Activated CD4-positive, alpha-beta memory T cell treated with anti-CD3 and anti-CD28 coated beads for 36 hours (primary cell): ENCODE measurements at regions of chr10 and their contacts with region 1.

Region 1: DNA sequence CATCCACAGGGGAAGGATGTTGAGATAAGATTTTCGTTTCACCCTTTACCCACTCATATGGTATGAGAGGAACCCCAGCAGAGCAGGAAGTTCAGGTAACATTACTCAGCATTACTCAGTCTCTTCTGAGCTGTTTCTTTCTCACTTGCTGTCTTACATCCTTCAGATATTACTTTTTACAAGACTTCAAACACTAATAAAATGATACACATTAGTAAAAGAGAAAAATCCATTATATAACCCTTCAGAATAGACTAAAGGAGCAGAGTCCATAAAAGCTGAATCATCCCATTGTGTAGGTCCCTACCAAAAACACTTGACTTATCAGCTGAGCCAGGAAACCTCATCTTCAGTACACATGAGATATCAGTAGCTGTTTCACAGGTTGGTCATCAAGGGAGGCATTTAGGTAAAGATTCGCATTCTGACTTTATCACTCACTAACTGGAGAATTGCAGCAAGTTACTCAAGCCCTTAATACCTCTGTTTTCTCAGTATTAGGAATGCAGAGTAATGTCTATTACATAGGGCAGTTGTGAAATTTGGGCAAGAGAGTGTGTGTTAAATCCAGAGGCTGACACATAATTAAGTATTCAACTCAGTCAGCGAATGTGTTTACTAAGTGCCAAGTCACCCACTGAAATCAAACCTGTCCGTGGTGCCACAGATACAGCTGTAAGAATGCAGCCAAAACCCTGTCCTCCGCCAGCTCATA is 44.7 kb downstream of the KLF6 start:
- DNase-seq: peak; percentile 57
- H3K4me3 Mint-ChIP-seq: peak overlapping the region; percentile 43
- H3K27ac Mint-ChIP-seq: peak overlapping the region; percentile 82
- H3K4me1 Mint-ChIP-seq: peaks cover 28% of the 10 kb centered on the region
- H3K27me3 Mint-ChIP-seq: no peaks in the 10 kb centered on the region

Region 2: GRCh38 chr10:3668276-3668965 is 71.9 kb before region 1 on chr10:
- CTCF ChIA-PET with region 1: no interaction called
- POLR2A ChIA-PET with region 1: no interaction called
- intact Hi-C with region 1: loop called (anchors 1 kb)
- DNase-seq: peak; percentile 76
- H3K4me3 Mint-ChIP-seq: peak overlapping the region; percentile 72
- H3K27ac Mint-ChIP-seq: peak overlapping the region; percentile 79
- H3K4me1 Mint-ChIP-seq: peaks cover 38% of the 10 kb centered on the region
- H3K27me3 Mint-ChIP-seq: no peaks in the 10 kb centered on the region

Region 3: DNA sequence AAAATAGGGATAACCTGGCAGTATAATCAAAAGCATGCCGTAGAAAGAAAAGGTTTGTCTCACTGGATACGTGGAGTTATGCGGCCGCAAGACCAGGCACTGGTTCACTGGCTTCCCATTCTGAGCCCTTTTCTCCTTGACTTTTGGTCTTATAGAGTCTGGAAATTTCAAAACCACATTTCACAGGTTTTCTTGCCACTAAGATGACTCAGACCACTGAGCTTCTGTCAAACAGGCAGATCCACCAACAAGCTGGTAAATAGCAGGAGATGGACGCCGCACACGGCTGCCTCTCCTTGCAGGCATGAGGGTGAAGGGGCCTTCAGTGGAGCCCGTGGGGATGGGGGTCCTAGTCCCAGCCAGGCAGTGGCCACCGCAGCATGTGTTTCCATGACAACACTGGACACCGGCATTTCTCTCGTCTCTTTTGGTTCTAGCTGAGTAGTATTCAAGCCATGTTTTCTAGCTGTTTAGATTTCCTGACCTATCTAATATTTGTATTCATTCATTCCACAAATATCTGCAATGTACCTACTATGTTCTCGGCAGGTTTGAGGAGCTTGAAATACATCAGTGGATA is 10.8 kb before region 1 on chr10:
- CTCF ChIA-PET with region 1: no interaction called
- POLR2A ChIA-PET with region 1: no interaction called
- intact Hi-C with region 1: no loop called
- DNase-seq: no peak
- H3K4me3 Mint-ChIP-seq: no peak overlapping the region
- H3K27ac Mint-ChIP-seq: no peak overlapping the region
- H3K4me1 Mint-ChIP-seq: peaks cover 2% of the 10 kb centered on the region
- H3K27me3 Mint-ChIP-seq: no peaks in the 10 kb centered on the region

Region 4: DNA sequence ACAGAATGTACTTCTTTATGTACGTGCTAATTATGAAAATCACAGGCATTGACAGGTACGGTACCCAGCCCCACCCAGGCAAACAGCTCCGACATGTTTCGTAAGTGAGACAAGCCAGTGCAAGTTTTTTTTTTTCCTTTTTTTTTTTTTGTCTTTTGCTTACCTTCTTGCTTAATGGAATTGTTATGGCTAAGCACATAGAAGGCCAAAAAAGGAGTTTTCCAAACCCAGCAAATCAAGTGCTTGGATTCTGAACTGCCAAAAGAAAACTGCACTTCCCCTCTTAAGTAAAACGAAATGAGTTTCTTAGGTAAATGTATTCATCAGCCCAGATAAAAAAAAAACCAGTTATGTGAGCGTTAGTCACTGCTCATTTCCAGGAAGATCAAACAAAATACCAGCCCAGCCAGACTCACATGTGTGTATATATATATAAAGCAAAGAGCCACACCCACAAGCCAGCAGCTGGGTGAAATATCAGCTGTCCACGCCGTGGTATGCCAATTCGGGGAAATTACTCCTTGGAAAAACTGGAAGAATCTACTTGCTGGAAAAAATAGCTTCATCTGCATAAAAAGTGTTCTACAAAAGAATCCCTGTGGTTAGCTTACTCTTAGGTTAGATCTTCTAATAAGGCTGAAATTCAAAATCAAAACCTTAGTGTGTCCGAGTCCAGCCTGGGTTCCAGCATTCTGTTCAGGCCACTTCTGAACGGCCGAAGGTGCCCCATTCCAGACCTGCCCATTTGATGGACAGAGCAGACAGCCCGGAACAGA is 36.7 kb after region 1 on chr10:
- CTCF ChIA-PET with region 1: interaction called, 4 read pairs
- POLR2A ChIA-PET with region 1: interaction called, 26 read pairs
- intact Hi-C with region 1: loop called (anchors 1 kb)
- DNase-seq: peak; percentile 70
- H3K4me3 Mint-ChIP-seq: peak overlapping the region; percentile 67
- H3K27ac Mint-ChIP-seq: peak overlapping the region; percentile 83
- H3K4me1 Mint-ChIP-seq: peaks cover 77% of the 10 kb centered on the region
- H3K27me3 Mint-ChIP-seq: no peaks in the 10 kb centered on the region

Region 5: GRCh38 chr10:3868271-3868664 is 128.0 kb after region 1 on chr10:
- CTCF ChIA-PET with region 1: no interaction called
- POLR2A ChIA-PET with region 1: interaction called, 7 read pairs
- intact Hi-C with region 1: loop called (anchors 1 kb)
- DNase-seq: no peak
- H3K4me3 Mint-ChIP-seq: no peak overlapping the region
- H3K27ac Mint-ChIP-seq: peak overlapping the region; percentile 93
- H3K4me1 Mint-ChIP-seq: peaks cover 76% of the 10 kb centered on the region
- H3K27me3 Mint-ChIP-seq: no peaks in the 10 kb centered on the region

Region 6: DNA sequence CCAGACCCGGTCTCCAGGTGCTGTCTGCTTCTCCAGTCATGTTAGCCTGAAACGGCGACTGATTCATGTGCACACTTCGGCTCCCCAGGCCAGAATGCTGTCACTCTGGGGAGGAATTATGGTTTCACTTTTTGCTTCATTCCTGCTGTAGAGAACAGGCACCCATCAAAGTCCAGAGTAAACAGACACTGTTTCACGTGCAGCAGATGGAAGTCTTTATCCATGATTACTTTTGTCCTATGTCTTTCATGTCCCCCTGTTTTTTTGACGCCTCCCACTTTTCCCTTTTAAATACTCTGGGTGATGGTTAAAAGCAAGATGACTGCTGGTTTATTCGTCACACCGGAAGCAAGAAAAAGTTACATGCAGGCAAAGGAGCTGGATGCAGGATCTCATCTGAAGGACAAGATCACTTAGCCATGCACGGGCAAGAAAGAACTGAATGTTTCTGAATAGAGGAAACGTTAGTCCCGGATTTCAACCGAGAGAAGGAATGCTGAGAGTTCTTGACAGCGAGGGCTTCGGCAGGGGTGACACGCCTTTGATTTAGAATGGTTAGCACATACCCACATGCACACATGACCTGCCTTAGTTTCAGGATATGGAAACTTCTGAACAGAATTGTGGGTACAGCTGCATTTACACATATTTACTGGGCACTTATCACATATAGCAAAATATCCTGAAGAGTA is 294.7 kb after region 1 on chr10:
- CTCF ChIA-PET with region 1: no interaction called
- POLR2A ChIA-PET with region 1: no interaction called
- intact Hi-C with region 1: no loop called
- DNase-seq: peak; percentile 48
- H3K4me3 Mint-ChIP-seq: peak overlapping the region; percentile 2
- H3K27ac Mint-ChIP-seq: peak overlapping the region; percentile 32
- H3K4me1 Mint-ChIP-seq: peaks cover 33% of the 10 kb centered on the region
- H3K27me3 Mint-ChIP-seq: no peaks in the 10 kb centered on the region

Region 7: GRCh38 chr10:4546500-4546899 is 806.2 kb after region 1 on chr10:
- CTCF ChIA-PET with region 1: no interaction called
- POLR2A ChIA-PET with region 1: no interaction called
- intact Hi-C with region 1: loop called (anchors 5 kb)
- DNase-seq: peak; percentile 66
- H3K4me3 Mint-ChIP-seq: no peak overlapping the region
- H3K27ac Mint-ChIP-seq: no peak overlapping the region
- H3K4me1 Mint-ChIP-seq: peaks cover 8% of the 10 kb centered on the region
- H3K27me3 Mint-ChIP-seq: peaks cover 2% of the 10 kb centered on the region